Activated CD4-positive, alpha-beta T cell treated with anti-CD3 and anti-CD28 coated beads for 36 hours (primary cell): ENCODE measurements at regions of chr1 and their contacts with region 1.

Region 1: DNA sequence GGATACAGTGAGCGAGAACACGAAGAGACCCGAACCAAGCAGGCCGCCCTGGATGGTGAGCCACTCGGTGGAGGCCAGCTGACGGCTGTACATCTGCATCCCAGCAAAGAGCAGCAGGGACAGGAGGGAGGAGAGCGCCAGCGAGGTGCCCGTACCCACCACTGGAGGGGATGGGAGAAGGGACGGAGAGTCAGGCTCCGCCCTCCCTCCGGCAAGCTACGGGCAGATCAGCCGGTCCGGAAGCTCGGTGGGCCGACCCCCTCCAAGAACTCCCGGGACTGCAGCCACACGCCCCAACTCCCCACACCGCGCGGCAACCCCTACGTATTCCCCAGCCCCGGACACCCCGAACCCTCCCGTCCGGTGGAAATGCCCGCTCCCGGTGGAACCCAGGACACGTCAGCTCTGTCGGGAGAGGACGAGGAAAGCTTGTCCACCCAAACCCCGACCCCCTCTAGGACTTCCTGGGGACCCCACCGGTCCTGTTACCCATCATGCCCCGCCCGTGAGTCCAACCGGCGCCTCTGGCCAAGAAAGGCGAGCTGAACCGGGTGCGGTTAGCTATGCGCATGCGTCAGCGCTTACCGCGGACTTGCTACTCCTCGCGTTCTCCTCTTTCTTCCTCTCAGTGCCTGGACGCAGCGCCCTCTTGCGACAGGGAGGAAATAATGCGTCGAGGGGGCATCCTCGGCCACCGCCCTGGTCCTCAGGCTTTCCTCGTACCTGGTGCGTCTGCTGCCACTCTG is at the start of gene KRTCAP2:
- DNase-seq: peak; percentile 97
- ATAC-seq: peak; percentile 83
- H3K4me3 Mint-ChIP-seq: peak within 1 kb of the TSS; percentile 98
- H3K27ac Mint-ChIP-seq: peak within 1 kb of the TSS; percentile 96
- H3K4me1 Mint-ChIP-seq: peaks cover 52% of the 10 kb centered on the region
- H3K27me3 Mint-ChIP-seq: no peaks in the 10 kb centered on the region
- total RNA-seq, gene KRTCAP2: 125 to 300 TPM

Region 2: GRCh38 chr1:154982897-154983648 is 189.8 kb before region 1 on chr1 and contains the start of gene FLAD1:
- CTCF ChIA-PET with region 1: no interaction called
- POLR2A ChIA-PET with region 1: no interaction called
- intact Hi-C with region 1: loop called in 1 of 2 experiments (anchors 5 kb)
- DNase-seq: peak; percentile 97
- ATAC-seq: peak; percentile 99
- H3K4me3 Mint-ChIP-seq: no peak within 1 kb of the TSS
- H3K27ac Mint-ChIP-seq: no peak within 1 kb of the TSS
- H3K4me1 Mint-ChIP-seq: peaks cover 21% of the 10 kb centered on the region
- H3K27me3 Mint-ChIP-seq: no peaks in the 10 kb centered on the region
- total RNA-seq, gene FLAD1: 38.0 to 42.4 TPM

Region 3: DNA sequence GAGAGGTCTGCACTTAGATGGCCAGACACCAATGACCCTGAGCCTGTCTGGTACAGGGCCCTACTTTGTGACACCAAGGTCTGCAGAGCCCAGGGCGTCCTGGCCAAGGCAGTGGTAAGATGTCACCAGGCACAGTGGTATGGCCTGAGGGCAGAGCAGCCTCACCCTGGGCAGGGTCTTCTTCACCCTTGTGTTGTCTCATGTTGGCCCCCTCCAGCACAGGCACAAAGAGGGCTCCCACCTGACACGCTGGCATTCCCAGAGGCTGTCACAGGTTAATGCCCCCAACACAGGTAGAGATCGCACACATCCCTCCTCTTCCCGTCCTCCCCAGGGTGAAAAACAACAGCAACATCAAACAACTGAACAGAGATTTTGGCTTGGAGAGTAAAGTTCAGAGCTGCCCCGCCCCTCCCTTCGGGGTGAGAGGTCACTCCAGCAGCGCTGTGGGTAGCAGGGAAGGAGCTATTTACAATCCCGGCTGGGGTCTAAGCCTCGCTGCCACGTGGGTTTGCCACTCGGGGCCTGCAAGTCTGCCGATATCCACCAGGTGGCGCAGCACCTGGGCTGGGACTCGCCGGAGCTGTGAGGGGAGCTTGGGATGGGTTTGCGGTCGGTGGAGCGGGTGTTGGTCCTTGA is 81.7 kb before region 1 on chr1:
- CTCF ChIA-PET with region 1: interaction called, 72 read pairs
- POLR2A ChIA-PET with region 1: interaction called, 10 read pairs
- intact Hi-C with region 1: loop called in 1 of 2 experiments (anchors 1 kb)
- DNase-seq: peak; percentile 90
- ATAC-seq: peak; percentile 88
- H3K4me3 Mint-ChIP-seq: no peak overlapping the region
- H3K27ac Mint-ChIP-seq: no peak overlapping the region
- H3K4me1 Mint-ChIP-seq: peaks cover 7% of the 10 kb centered on the region
- H3K27me3 Mint-ChIP-seq: peaks cover 6% of the 10 kb centered on the region

Region 4: DNA sequence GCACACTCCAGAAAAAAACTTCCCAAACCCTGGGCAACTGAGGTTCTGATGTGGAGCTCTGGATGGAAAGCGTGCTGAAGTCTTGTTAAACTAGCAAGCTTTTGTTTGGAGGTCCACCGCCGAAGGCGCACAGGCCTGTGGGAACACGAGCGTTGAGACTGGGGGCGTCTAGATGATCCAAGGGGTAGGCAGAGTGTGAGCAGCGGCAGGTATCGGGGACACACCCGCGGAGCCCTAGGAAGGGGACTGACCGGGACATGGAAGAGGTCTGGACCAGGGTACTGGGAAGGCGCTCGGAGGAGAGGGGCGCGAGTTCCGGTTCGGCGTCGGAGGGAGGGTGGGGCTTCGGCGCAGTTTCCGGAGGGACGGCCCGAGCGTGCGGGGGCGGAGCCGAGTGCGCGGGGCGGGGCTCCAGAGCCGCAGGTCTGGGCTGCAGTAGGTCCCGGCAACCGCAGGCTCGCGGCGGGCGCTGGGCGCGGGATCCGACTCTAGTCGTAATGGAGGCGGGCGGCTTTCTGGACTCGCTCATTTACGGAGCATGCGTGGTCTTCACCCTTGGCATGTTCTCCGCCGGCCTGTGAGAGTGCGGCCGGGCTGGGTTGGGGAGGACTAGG is 37.4 kb before region 1 on chr1 and contains the start of gene SLC50A1:
- CTCF ChIA-PET with region 1: interaction called, 28 read pairs
- POLR2A ChIA-PET with region 1: interaction called, 5 read pairs
- intact Hi-C with region 1: loop called (anchors 1 to 2 kb)
- DNase-seq: peak; percentile 97
- ATAC-seq: peak; percentile 78
- H3K4me3 Mint-ChIP-seq: peak within 1 kb of the TSS; percentile 96
- H3K27ac Mint-ChIP-seq: peak within 1 kb of the TSS; percentile 97
- H3K4me1 Mint-ChIP-seq: peaks cover 35% of the 10 kb centered on the region
- H3K27me3 Mint-ChIP-seq: no peaks in the 10 kb centered on the region
- total RNA-seq, gene SLC50A1: 50.2 to 58.0 TPM

Region 5: DNA sequence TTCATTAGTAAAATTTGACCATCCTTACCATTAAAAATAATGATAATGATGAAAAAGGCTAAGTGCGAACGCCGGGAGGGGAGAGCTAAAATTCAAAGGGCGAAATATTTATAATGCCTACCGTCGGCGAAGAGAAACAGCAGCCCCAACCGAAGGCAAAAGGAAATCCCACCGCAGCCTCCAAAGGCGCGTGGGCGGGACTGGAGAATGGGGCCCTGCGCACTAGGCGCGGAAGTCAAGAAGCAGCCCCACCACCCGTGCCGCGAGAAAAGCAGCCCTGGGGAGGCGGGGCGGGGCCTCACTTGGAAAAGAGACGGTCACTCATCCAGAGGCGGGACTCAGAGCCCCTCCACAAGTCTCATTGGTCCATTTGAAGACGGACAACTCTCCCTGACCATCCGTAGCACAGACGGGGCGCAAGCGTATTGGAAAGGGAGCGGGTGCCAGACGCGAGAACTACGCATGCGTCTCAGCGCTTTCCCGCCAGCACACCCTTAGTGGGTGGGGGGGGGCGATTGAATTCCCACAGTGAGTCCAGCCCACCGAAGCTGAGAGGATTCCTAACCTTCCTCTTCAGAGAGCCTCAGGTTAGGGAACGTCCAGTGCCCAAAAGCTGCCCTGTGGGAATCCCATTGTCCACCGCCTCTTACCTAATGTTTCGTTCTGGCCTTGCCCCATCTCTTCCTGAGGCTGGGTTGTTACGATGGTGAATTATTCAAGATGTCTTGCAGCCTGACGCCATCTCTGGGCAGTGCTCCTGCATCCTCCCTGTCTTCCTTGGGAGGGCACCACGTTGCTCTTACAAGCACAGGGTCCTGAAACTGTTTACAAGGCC is 54.6 kb after region 1 on chr1:
- CTCF ChIA-PET with region 1: interaction called, 7 read pairs
- POLR2A ChIA-PET with region 1: no interaction called
- intact Hi-C with region 1: loop called (anchors 1 kb)
- DNase-seq: peak; percentile 99
- ATAC-seq: peak; percentile 98
- H3K4me3 Mint-ChIP-seq: peak overlapping the region; percentile 96
- H3K27ac Mint-ChIP-seq: peak overlapping the region; percentile 97
- H3K4me1 Mint-ChIP-seq: peaks cover 27% of the 10 kb centered on the region
- H3K27me3 Mint-ChIP-seq: no peaks in the 10 kb centered on the region